Activated CD4-positive, alpha-beta T cell treated with anti-CD3 and anti-CD28 coated beads for 36 hours (primary cell): ENCODE measurements at regions of chr1 and their contacts with region 1.

Region 1: GRCh38 chr1:25549273-25550154 is 6.1 kb downstream of the LDLRAP1 start:
- DNase-seq: peak; percentile 90
- ATAC-seq: peak; percentile 96
- H3K4me3 Mint-ChIP-seq: peak overlapping the region; percentile 69
- H3K27ac Mint-ChIP-seq: peak overlapping the region; percentile 98
- H3K4me1 Mint-ChIP-seq: peaks cover 90% of the 10 kb centered on the region
- H3K27me3 Mint-ChIP-seq: no peaks in the 10 kb centered on the region

Region 2: GRCh38 chr1:25185409-25186160 is 363.9 kb before region 1 on chr1:
- CTCF ChIA-PET with region 1: no interaction called
- POLR2A ChIA-PET with region 1: no interaction called
- intact Hi-C with region 1: no loop called
- DNase-seq: no peak
- ATAC-seq: no peak
- H3K4me3 Mint-ChIP-seq: no peak overlapping the region
- H3K27ac Mint-ChIP-seq: no peak overlapping the region
- H3K4me1 Mint-ChIP-seq: no peaks in the 10 kb centered on the region
- H3K27me3 Mint-ChIP-seq: no peaks in the 10 kb centered on the region

Region 3: GRCh38 chr1:25566730-25567341 is 17.3 kb after region 1 on chr1:
- CTCF ChIA-PET with region 1: interaction called, 17 read pairs
- POLR2A ChIA-PET with region 1: interaction called, 14 read pairs
- intact Hi-C with region 1: loop called (anchors 1 kb)
- DNase-seq: peak; percentile 68
- ATAC-seq: peak; percentile 18
- H3K4me3 Mint-ChIP-seq: peak overlapping the region; percentile 9
- H3K27ac Mint-ChIP-seq: peak overlapping the region; percentile 69
- H3K4me1 Mint-ChIP-seq: peaks cover 82% of the 10 kb centered on the region
- H3K27me3 Mint-ChIP-seq: no peaks in the 10 kb centered on the region

Region 4: DNA sequence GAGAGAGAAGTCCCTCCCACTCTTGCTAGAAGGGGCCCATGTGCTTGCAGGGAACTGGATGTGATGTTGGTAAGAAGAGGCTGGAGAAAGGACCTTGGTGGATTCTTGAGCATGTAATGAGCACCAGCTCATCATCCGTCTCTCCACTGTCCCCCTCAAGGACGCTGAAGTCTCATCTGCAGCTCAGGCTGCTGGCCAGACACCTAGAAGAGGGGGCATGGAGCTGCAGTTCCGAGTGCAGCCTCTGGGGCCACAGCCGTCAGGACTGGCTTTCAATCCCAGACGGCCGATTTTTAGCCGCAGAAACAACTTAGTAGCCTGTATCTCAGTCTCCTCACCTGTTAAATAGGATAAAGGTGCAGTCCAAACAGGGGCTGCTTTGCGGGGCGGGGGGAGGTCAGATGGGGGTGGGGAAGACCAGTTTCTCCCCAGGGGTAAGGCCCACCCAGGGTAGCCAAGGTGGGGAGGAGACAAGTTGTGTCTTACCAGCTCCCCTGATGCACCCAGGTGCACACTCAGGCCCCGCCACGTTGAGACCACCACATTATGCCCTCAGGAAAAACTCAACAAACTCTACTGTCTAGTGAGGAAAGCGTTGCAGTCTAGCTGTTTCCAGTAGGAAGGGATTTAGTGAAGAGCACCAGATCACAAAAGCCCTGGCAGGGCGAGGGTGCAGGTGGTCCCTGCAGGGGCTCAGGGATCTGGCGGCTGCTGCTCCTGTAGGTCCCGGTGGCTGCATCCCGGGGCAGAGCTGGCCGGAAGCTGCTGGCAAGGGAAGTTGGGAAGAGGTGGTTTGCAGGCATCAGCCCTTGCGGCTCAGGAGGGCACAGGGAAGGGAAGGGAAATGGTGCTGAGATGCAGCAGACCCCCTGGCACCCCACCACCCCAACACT is 23.4 kb after region 1 on chr1:
- CTCF ChIA-PET with region 1: interaction called, 10 read pairs
- POLR2A ChIA-PET with region 1: no interaction called
- intact Hi-C with region 1: no loop called
- DNase-seq: peak; percentile 77
- ATAC-seq: peak; percentile 76
- H3K4me3 Mint-ChIP-seq: no peak overlapping the region
- H3K27ac Mint-ChIP-seq: no peak overlapping the region
- H3K4me1 Mint-ChIP-seq: peaks cover 38% of the 10 kb centered on the region
- H3K27me3 Mint-ChIP-seq: no peaks in the 10 kb centered on the region

Region 5: DNA sequence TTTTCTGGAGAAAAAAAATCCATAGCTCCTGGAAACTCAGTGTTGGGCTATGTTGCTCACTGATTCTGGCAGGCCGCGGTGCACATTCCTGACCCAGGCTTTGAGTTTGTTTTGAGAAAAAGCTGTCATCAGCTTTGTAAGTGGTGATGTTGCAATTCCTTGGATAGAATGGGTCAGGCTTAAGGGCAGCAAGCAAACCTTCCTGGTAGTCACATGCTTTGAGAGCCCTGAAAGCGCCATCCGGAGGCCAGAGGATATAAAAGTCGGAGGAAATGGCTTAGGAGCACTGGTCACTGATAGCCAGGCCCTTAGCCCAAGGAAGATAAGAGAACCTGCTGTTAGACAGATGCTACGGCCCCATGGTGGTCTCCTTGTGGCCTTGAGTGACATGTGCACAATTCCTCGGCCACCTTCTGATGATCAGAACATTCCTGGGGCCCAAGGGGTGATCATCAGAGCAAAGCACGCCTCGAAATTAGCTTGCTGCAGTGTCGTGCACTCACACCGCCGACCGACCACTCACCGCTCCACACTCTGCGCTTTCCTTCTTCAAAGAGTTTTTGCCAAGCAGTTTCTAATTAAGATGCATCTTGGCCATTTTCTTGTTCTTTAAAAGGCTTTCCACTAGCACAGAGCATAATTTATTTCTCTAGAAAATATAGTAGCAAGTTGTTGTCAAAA is 145.7 kb after region 1 on chr1:
- CTCF ChIA-PET with region 1: interaction called, 4 read pairs
- POLR2A ChIA-PET with region 1: no interaction called
- intact Hi-C with region 1: loop called in 1 of 2 experiments (anchors 5 kb)
- DNase-seq: no peak
- ATAC-seq: no peak
- H3K4me3 Mint-ChIP-seq: peak overlapping the region; percentile 43
- H3K27ac Mint-ChIP-seq: peak overlapping the region; percentile 70
- H3K4me1 Mint-ChIP-seq: peaks cover 56% of the 10 kb centered on the region
- H3K27me3 Mint-ChIP-seq: no peaks in the 10 kb centered on the region